CD14-positive monocyte (primary cell): ENCODE measurements at regions of chr20 and their contacts with region 1.

Region 1: GRCh38 chr20:56392282-56393137 is at the start of gene CSTF1:
- DNase-seq: peak; percentile 100
- H3K4me3 ChIP-seq: peak within 1 kb of the TSS; percentile 86 to 96 (median 86)
- H3K4me3 Mint-ChIP-seq: no peak within 1 kb of the TSS
- H3K27ac ChIP-seq: peak within 1 kb of the TSS; percentile 85 to 94
- H3K27ac Mint-ChIP-seq: peak within 1 kb of the TSS in 5 of 7 donors; percentile 22 to 90 (median 75)
- H3K4me1 ChIP-seq: peaks cover 19 to 28% of the 10 kb centered on the region in 2 donors
- H3K4me1 Mint-ChIP-seq: peaks cover 26% of the 10 kb centered on the region
- H3K27me3 ChIP-seq: no peaks in the 10 kb centered on the region
- H3K27me3 Mint-ChIP-seq: no peaks in the 10 kb centered on the region
- CTCF ChIP-seq: no peak
- polyA plus RNA-seq, gene CSTF1: 7.7 to 15.7 (median 10.7) TPM

Region 2: DNA sequence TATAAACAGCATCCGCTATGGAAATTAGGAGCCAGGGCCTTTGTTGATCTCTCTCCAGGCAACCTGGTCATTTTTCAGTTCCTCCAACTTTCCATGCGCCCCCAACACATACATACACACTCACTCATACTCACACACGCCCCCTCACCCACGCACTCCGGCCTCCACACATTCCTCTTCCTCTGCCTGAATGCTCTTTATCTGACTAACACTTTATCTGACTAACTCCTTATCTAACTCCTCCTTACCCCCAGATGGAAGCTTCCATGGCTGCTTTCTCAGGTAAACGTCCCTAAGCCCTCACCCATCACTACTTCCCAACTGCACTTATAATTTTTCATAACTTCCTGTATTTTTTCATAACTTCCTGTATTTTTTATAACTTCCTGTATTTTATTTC is 37.0 kb after region 1 on chr20:
- intact Hi-C with region 1: loop called in 1 of 2 experiments (anchors 5 kb)
- DNase-seq: peak in 2 of 3 donors; percentile 44 to 46
- H3K4me3 ChIP-seq: peak overlapping the region in 1 of 3 experiments; percentile 65
- H3K4me3 Mint-ChIP-seq: peak overlapping the region; percentile 42 to 75
- H3K27ac ChIP-seq: no peak overlapping the region
- H3K27ac Mint-ChIP-seq: peak overlapping the region; percentile 46 to 89 (median 71)
- H3K4me1 ChIP-seq: peaks cover 61 to 67% of the 10 kb centered on the region in 2 donors
- H3K4me1 Mint-ChIP-seq: peaks cover 73% of the 10 kb centered on the region
- H3K27me3 ChIP-seq: peaks cover 27 to 32% of the 10 kb centered on the region in 2 donors
- H3K27me3 Mint-ChIP-seq: peaks cover 52 to 66% (median 61%) of the 10 kb centered on the region in 3 donors
- CTCF ChIP-seq: no peak

Region 3: DNA sequence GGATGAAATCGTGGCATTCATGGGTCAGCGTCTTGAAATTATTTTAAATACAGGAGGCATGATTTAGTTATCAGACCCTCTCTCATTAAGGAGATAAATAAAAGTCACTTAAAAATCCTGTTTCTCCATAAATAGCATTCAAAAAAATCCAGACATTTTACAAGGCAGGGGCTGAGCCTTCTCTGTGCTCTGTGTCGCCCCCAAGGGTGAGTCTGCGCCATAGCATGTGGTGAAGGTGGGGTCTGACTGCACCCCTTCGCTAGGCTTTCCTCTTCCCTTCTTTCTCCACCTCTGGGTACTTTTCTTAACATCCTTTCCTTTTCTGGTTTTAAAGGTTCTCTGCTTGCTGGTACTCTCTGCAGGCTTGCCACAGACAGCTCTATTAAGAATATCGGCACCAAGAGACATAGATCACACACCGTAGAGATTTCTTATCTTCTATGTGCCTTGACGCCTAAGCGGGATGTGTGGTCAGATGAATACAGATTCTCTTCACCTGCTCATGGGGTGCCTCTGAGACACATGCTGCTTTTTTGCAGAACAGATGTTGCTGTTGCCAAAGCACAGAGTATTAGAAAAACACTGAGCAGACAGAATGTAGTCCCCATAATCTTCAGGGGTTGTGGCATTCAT is 112.0 kb after region 1 on chr20:
- intact Hi-C with region 1: no loop called
- DNase-seq: no peak
- H3K4me3 ChIP-seq: no peak overlapping the region
- H3K4me3 Mint-ChIP-seq: no peak overlapping the region
- H3K27ac ChIP-seq: peak overlapping the region in 1 of 2 donors; percentile 27
- H3K27ac Mint-ChIP-seq: no peak overlapping the region
- H3K4me1 ChIP-seq: no peaks in the 10 kb centered on the region
- H3K4me1 Mint-ChIP-seq: no peaks in the 10 kb centered on the region
- H3K27me3 ChIP-seq: no peaks in the 10 kb centered on the region
- H3K27me3 Mint-ChIP-seq: no peaks in the 10 kb centered on the region
- CTCF ChIP-seq: peak; percentile 71